Sigmoid colon (tissue), 7 donors: ENCODE measurements at regions of chr9 and their contacts with region 1.

Region 1: GRCh38 chr9:77848897-77849296 is 182.7 kb downstream of the GNAQ start:
- DNase-seq: peak; percentile 92
- H3K4me3 ChIP-seq: no peak overlapping the region
- H3K27ac ChIP-seq: peak overlapping the region; percentile 45 to 74 (median 62)
- H3K4me1 ChIP-seq: peaks cover 0 to 60% (median 39%) of the 10 kb centered on the region in 4 donors
- H3K27me3 ChIP-seq: no peaks in the 10 kb centered on the region
- CTCF ChIP-seq: no peak
- EP300 ChIP-seq: peak in 1 of 4 donors; percentile 3
- POLR2A ChIP-seq: no peak

Region 2: DNA sequence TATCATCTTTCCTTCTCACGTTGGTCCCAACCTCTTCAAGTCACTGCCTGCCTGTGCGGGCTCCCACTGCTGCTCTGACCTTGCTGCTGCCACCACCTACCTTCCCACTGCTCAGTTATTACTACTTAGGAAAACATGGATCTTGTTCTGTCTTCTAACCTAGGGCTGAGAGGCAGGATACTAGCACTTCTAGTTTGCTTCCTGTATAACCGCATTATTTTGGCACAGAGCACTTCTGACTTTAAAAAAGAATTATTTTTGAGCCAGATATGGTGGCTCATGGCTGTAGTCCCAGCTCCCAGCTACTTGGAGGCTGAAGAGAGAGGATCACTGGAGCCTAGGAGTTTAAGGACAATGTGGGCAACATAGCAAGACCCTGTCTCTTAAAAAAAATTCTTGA is 65.4 kb before region 1 on chr9:
- intact Hi-C with region 1: no loop called
- DNase-seq: no peak
- H3K4me3 ChIP-seq: no peak overlapping the region
- H3K27ac ChIP-seq: no peak overlapping the region
- H3K4me1 ChIP-seq: peaks cover 0 to 13% (median 6%) of the 10 kb centered on the region in 4 donors
- H3K27me3 ChIP-seq: no peaks in the 10 kb centered on the region
- CTCF ChIP-seq: no peak
- EP300 ChIP-seq: no peak
- POLR2A ChIP-seq: no peak

Region 3: DNA sequence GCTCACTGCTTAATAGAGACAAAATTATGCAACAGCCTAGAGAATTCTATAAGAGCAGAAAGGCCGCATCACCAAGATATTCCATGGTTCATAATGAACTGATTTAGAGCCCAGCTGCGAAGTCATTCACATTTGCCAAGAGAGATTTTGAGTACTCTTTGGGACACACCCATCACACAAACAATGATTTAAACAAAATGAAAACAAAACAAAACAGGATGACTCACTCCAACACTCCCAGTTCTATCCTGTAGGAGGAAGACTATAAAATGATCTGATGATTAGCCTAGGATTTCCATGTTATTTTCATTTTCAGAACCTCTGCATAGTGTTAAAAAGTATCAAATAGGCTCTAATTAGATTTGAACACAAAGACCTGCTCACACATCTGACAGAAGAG is 55.0 kb before region 1 on chr9:
- intact Hi-C with region 1: no loop called
- DNase-seq: no peak
- H3K4me3 ChIP-seq: no peak overlapping the region
- H3K27ac ChIP-seq: no peak overlapping the region
- H3K4me1 ChIP-seq: peaks cover 0 to 8% (median 0%) of the 10 kb centered on the region in 4 donors
- H3K27me3 ChIP-seq: no peaks in the 10 kb centered on the region
- CTCF ChIP-seq: no peak
- EP300 ChIP-seq: no peak
- POLR2A ChIP-seq: no peak

Region 4: GRCh38 chr9:77885104-77885672 is 36.3 kb after region 1 on chr9:
- intact Hi-C with region 1: loop called (anchors 5 kb)
- DNase-seq: no peak
- H3K4me3 ChIP-seq: no peak overlapping the region
- H3K27ac ChIP-seq: peak overlapping the region in 3 of 4 donors; percentile 46 to 65 (median 56)
- H3K4me1 ChIP-seq: peaks cover 0 to 39% (median 29%) of the 10 kb centered on the region in 4 donors
- H3K27me3 ChIP-seq: no peaks in the 10 kb centered on the region
- CTCF ChIP-seq: no peak
- EP300 ChIP-seq: no peak
- POLR2A ChIP-seq: no peak

Region 5: GRCh38 chr9:78029551-78030295 is 180.8 kb after region 1 on chr9:
- intact Hi-C with region 1: loop called (anchors 5 kb)
- DNase-seq: no peak
- H3K4me3 ChIP-seq: peak overlapping the region; percentile 70 to 82 (median 76)
- H3K27ac ChIP-seq: peak overlapping the region; percentile 89 to 97 (median 94)
- H3K4me1 ChIP-seq: peaks cover 0 to 65% (median 48%) of the 10 kb centered on the region in 4 donors
- H3K27me3 ChIP-seq: no peaks in the 10 kb centered on the region
- CTCF ChIP-seq: no peak
- EP300 ChIP-seq: no peak
- POLR2A ChIP-seq: no peak

Region 6: DNA sequence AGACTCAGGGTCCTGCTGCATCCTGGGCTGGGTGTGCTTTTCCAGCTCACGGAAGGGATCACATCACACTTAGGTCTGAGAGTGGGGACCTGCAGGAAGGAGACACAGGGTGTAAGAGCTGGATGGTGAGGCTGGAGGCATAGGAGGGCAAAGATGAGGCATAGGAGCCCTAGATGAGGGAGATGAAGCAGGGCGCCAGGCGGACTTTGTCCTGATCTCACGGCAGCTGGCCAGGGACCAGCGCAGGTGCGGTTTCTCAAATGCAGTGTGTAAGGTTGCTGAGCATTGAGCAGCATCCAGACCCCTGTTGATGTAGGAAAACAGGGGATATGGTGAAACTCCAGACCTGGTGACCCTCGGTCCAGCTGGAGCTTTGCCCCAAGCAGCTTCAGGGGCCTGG is 604.6 kb after region 1 on chr9:
- intact Hi-C with region 1: no loop called
- DNase-seq: no peak
- H3K4me3 ChIP-seq: no peak overlapping the region
- H3K27ac ChIP-seq: no peak overlapping the region
- H3K4me1 ChIP-seq: no peaks in the 10 kb centered on the region
- H3K27me3 ChIP-seq: peaks cover 0 to 5% (median 0%) of the 10 kb centered on the region in 3 donors
- CTCF ChIP-seq: no peak
- EP300 ChIP-seq: no peak
- POLR2A ChIP-seq: no peak

Region 7: DNA sequence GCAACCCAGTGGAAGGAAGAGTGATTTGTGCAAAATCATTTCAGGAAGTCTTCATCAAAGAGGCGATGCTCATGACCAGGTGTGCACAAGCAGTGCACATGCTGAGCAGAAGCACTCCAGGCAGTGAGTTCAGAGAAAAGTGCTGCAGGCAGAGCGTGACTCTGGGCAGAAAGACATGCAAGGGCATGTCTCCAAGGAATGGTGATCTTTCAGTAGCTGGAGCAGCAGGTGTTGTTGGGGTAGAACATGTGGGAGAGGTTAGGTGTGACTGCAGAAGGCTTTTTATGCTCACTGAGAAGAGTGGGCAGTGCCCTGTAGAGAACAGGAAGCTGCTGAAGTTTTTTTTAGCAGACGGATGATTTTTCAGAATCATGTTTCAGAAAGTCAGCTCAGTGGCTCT is 1177.4 kb after region 1 on chr9:
- intact Hi-C with region 1: no loop called
- DNase-seq: no peak
- H3K4me3 ChIP-seq: no peak overlapping the region
- H3K27ac ChIP-seq: no peak overlapping the region
- H3K4me1 ChIP-seq: no peaks in the 10 kb centered on the region
- H3K27me3 ChIP-seq: no peaks in the 10 kb centered on the region
- CTCF ChIP-seq: no peak
- EP300 ChIP-seq: no peak
- POLR2A ChIP-seq: no peak